ENCODE measurements at regions of chr4 and their contacts with region 1.

Region 1: DNA sequence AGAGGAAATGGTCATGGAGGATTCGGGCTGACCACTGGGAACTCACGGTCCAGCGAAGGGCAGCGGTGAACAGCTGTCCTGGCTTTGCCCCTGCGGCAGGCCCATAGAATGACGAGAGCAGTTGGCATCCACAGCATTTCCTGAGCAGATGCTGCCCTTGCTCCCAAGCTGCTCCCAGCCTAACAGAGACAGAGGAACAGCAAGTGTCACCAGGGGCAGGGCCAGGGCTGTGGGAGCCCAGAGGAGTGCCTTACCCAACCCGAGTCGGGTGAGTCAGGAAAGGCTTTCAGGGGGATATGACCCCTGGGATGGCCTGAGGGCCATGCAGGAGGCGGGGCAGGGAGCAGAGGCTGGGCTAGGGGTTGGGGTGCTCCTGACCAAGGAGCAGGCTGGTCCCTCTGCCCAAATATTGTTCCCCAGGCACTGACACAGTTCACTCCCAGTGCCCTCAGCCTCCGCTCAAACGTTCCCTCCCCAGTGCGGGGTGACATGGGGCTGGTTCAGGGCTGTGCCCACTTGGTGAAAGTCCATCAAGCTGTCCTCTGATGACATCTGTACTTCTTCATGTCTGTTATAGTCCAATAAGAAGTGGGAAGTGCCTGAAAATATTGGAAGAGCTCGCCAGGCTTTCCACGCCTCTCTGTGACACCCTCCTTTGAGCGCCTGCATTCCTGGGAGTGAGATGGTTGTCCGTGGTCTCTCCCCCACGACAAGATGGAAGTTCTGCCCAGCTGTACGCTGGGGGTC is 64.7 kb upstream of the GPR78 start:
- DNase-seq: no peak
- H3K4me3 ChIP-seq: no peak overlapping the region
- H3K27ac ChIP-seq: no peak overlapping the region
- H3K4me1 ChIP-seq: no peaks in the 10 kb centered on the region
- H3K27me3 ChIP-seq: no peaks in the 10 kb centered on the region
- CTCF ChIP-seq: no peak
- POLR2A ChIP-seq: no peak

Region 2: GRCh38 chr4:7381221-7381889 is 1134.1 kb before region 1 on chr4:
- intact Hi-C with region 1: loop called (anchors 10 kb)
- DNase-seq: no peak
- H3K4me3 ChIP-seq: no peak overlapping the region
- H3K27ac ChIP-seq: no peak overlapping the region
- H3K4me1 ChIP-seq: peaks cover 6% of the 10 kb centered on the region
- H3K27me3 ChIP-seq: no peaks in the 10 kb centered on the region
- CTCF ChIP-seq: no peak
- POLR2A ChIP-seq: no peak

Measured in prostate gland (tissue), 2 donors.